ENCODE measurements at regions of chr5 and their contacts with region 1.

Region 1: DNA sequence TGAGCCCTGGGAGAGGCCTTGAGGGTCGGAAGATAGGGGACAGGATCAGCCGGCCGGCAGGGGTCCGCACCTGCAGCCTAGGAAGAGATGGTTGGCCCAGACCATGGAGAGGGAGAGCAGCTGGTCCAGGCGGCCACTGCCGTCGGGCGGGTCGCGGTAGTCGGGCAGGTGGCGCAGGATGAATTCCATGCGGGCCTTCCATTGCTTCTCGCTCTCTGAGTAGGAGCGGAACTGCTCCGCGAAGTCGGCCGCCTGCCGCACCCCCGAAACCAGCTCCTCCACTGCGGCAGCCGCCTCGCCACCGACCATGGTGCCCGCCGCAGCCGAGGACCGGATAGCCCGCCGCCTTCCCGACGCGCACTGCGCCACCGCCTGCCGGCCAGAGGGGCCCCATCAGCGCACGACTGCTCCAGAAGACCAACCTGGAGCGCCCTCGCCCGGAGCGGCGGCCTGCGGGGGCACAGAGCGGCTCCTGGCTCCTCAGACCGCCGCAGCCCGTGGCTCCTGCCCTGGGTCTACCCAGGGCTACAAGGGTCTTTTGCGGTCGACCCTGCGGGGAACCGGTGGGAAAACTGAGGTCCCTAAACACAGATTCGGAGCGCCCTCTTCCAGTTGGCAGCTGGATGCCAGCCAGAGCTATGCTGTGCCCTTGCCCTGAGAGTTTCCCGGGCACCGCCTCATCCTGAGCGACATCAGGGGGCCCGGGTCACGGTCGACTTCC is at the start of gene CDKN2AIPNL:
- DNase-seq: peak; percentile 91
- H3K4me3 Mint-ChIP-seq: peak within 1 kb of the TSS; percentile 96
- H3K27ac Mint-ChIP-seq: peak within 1 kb of the TSS; percentile 84
- H3K4me1 Mint-ChIP-seq: peaks cover 36% of the 10 kb centered on the region
- H3K27me3 Mint-ChIP-seq: no peaks in the 10 kb centered on the region
- total RNA-seq, gene CDKN2AIPNL: 23.4 to 23.5 TPM

Region 2: DNA sequence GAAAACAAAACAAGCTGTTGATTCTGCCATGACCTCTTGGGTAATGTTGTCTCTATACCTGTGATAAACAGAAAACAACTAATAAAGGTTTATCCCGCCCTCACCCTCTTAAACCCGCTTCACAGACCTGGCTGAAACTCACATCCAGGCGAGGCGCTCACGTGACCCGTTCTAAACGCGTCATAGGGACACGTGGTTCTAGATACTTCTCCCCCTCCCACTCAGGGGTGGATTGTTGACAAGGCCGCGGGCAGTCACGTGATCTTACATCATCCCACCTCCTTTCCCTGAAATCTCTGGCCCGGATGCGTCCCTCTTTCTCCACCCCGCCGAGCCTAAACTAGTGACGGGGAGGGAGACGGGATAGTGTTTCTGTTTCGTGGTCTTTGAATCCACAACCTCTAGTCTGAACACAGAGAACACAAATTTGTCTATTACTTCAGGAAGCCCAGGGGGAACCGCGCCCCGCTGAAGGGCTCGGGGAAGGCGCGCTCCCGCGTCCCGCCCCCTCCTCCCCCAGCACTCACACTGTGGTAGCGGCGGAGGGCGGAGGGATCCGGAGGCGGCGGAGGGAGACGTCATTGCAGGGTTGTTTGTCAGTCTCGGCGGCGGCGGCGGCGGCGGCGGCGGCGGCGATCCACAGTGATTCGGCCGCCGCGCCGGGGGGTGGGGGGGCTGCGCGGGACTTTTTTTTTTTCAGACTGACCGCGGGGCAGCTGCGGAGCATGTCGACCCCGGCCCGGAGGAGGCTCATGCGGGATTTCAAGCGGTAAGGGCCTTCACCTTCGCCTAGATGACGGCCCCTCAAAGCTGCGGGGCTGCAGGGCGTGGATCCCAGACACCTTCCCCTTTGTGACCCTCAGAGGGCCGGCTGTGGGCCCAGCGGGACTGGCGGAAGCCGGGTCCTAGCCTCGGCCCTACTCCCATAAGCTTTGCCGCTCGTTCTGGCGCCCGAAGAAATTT is 40.6 kb before region 1 on chr5 and contains the start of gene UBE2B:
- CTCF ChIA-PET with region 1: interaction called, 8 read pairs
- POLR2A ChIA-PET with region 1: interaction called, 56 read pairs
- DNase-seq: peak; percentile 98
- H3K4me3 Mint-ChIP-seq: peak within 1 kb of the TSS; percentile 97
- H3K27ac Mint-ChIP-seq: peak within 1 kb of the TSS; percentile 98
- H3K4me1 Mint-ChIP-seq: peaks cover 46% of the 10 kb centered on the region
- H3K27me3 Mint-ChIP-seq: peaks cover 2% of the 10 kb centered on the region
- total RNA-seq, gene UBE2B: 115 to 116 TPM

Region 3: GRCh38 chr5:134436523-134437339 is 25.0 kb after region 1 on chr5:
- CTCF ChIA-PET with region 1: interaction called, 3 read pairs
- POLR2A ChIA-PET with region 1: interaction called, 11 read pairs
- DNase-seq: peak; percentile 73
- H3K4me3 Mint-ChIP-seq: no peak overlapping the region
- H3K27ac Mint-ChIP-seq: peak overlapping the region; percentile 65
- H3K4me1 Mint-ChIP-seq: peaks cover 30% of the 10 kb centered on the region
- H3K27me3 Mint-ChIP-seq: no peaks in the 10 kb centered on the region

Region 4: GRCh38 chr5:134479839-134480238 is 68.1 kb after region 1 on chr5:
- CTCF ChIA-PET with region 1: no interaction called
- POLR2A ChIA-PET with region 1: no interaction called
- DNase-seq: no peak
- H3K4me3 Mint-ChIP-seq: no peak overlapping the region
- H3K27ac Mint-ChIP-seq: no peak overlapping the region
- H3K4me1 Mint-ChIP-seq: no peaks in the 10 kb centered on the region
- H3K27me3 Mint-ChIP-seq: peaks cover 2% of the 10 kb centered on the region

Region 5: GRCh38 chr5:134503088-134503946 is 91.6 kb after region 1 on chr5:
- CTCF ChIA-PET with region 1: no interaction called
- POLR2A ChIA-PET with region 1: interaction called, 17 read pairs
- DNase-seq: peak; percentile 85
- H3K4me3 Mint-ChIP-seq: peak overlapping the region; percentile 43
- H3K27ac Mint-ChIP-seq: peak overlapping the region; percentile 96
- H3K4me1 Mint-ChIP-seq: peaks cover 50% of the 10 kb centered on the region
- H3K27me3 Mint-ChIP-seq: no peaks in the 10 kb centered on the region